ENCODE measurements at regions of chr16 and their contacts with region 1.

Region 1: DNA sequence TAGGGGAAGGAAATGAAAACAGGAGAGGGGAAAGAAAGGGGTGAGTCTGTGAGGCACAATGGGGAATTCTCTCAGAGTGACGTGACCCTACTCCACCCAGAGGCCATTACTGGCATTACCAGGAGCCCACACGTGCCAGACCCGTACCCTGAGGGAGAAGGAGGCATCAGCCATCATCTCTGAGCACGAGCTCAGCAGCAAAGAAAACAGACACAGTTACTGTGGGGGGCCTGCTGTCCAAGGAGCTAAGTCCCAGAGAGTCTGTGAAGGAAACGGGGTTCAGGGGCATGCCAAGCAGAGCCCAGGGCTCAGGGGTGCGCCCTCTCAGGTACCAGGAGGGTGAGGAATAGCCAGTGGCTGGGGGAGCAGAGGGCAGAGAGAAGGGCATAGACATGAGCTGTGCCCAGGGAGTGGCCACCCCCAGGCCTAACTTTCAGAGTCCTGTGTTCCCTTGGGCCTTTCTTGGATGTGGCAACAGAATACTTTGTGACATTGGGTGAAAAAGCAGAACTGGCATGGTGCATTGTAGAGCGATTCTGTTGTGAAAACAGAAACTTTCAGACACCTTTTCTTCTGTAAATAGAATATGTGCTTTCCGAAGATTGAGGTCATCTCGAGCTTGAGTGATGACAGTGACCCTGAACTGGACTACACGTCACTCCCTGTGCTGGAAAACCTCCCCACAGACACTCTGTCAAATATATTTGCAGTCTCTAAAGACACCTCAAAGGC is 11.3 kb downstream of the TAF1C start:
- DNase-seq: peak in 1 of 2 donors; percentile 66
- H3K4me3 ChIP-seq: no peak overlapping the region
- CTCF ChIP-seq: peak in 1 of 3 donors; percentile 82
- POLR2A ChIP-seq: no peak

Region 2: DNA sequence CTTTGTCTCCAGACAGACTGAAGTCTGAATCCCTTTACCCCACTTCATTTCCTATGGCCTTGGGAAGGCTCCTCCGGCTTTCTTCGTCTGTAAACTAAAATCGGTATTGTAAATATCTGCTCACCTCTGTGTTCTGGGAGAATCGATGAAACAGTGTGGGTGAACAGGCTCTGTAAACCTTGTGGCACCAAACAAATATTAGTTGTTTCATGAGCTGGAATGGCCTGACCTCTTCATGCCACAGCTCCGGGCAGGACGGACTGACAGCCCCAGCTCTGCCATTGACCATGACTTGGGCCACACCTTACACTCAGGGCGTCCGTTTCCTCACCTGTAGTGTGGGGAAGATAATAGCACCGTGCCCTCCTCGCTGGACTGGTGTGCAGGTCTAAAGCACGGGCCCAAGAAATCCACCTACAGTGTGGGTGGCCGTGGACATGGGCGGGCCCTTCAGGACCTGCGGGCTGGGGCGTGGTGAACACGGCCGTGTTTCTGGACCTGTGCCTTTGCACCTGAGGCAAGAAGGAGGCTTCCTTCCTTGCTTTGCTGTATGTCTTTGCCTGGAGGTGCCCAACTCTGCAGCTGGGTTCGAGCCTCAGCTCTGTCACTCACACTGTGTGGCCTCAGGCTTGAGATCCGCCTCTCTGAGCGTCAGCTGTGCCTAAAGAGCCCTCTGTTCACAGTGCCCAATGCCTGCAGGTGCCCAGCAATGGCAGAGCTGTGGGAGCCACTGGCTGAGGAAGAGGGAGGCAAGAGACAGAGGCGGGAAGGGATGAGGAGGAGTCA is 228.5 kb before region 1 on chr16:
- intact Hi-C with region 1: loop called (anchors 5 kb)
- DNase-seq: no peak
- H3K4me3 ChIP-seq: no peak overlapping the region
- CTCF ChIP-seq: no peak
- POLR2A ChIP-seq: no peak

Region 3: GRCh38 chr16:84247844-84248243 is 72.3 kb after region 1 on chr16:
- intact Hi-C with region 1: no loop called
- DNase-seq: no peak
- H3K4me3 ChIP-seq: no peak overlapping the region
- CTCF ChIP-seq: no peak
- POLR2A ChIP-seq: no peak